ENCODE measurements at regions of chr3 and their contacts with region 1.

Region 1: DNA sequence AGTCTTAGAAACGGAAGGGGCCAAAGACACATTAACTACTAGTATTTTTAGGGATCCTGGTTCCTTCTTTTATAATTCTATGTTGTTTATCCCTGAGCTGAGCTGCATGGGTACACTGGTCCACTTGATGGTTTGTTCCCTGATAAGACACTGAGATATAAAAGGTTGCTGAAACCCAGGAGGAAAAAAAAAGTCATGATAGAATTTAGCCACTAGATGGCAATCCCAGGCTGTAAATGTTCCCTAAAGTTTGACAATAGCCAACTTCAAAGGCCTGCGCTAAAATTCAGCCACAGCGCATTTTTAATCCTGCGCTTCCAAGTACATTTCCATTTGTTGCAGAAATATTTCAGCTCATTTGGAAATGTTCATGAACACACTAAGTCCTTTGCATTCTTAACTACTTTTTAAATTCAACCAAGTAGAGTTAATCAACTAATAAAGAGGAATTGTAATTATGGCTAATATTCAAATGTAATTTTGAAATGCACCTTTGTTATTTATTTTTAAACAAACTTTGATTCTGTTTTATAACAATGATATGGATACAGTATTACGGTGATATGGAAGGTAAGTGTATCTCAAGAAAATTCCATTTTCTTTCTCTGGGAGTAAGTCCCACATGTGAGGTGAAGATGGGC is 249.3 kb upstream of the FEZF2 start:
- DNase-seq: peak in 1 of 9 donors; percentile 3
- ATAC-seq: no peak
- H3K4me3 ChIP-seq: no peak overlapping the region
- H3K4me3 Mint-ChIP-seq: no peak overlapping the region
- H3K27ac ChIP-seq: no peak overlapping the region
- H3K27ac Mint-ChIP-seq: no peak overlapping the region
- H3K4me1 ChIP-seq: no peaks in the 10 kb centered on the region
- H3K4me1 Mint-ChIP-seq: no peaks in the 10 kb centered on the region
- H3K27me3 ChIP-seq: no peaks in the 10 kb centered on the region
- H3K27me3 Mint-ChIP-seq: peaks cover 3 to 26% (median 11%) of the 10 kb centered on the region in 5 donors

Region 2: GRCh38 chr3:63232739-63233365 is 610.2 kb after region 1 on chr3:
- CTCF ChIA-PET with region 1: no interaction called
- POLR2A ChIA-PET with region 1: no interaction called
- intact Hi-C with region 1: loop called in 1 of 2 experiments (anchors 5 kb)
- DNase-seq: no peak
- ATAC-seq: no peak
- H3K4me3 ChIP-seq: no peak overlapping the region
- H3K4me3 Mint-ChIP-seq: no peak overlapping the region
- H3K27ac ChIP-seq: no peak overlapping the region
- H3K27ac Mint-ChIP-seq: no peak overlapping the region
- H3K4me1 ChIP-seq: no peaks in the 10 kb centered on the region
- H3K4me1 Mint-ChIP-seq: no peaks in the 10 kb centered on the region
- H3K27me3 ChIP-seq: no peaks in the 10 kb centered on the region
- H3K27me3 Mint-ChIP-seq: no peaks in the 10 kb centered on the region

Region 3: GRCh38 chr3:64484289-64484992 is 1861.8 kb after region 1 on chr3:
- CTCF ChIA-PET with region 1: no interaction called
- POLR2A ChIA-PET with region 1: no interaction called
- intact Hi-C with region 1: loop called in 1 of 2 experiments (anchors 5 kb)
- DNase-seq: peak; percentile 18 to 64 (median 46)
- ATAC-seq: peak; percentile 82
- H3K4me3 ChIP-seq: no peak overlapping the region
- H3K4me3 Mint-ChIP-seq: no peak overlapping the region
- H3K27ac ChIP-seq: no peak overlapping the region
- H3K27ac Mint-ChIP-seq: peak overlapping the region in 1 of 9 donors; percentile 37
- H3K4me1 ChIP-seq: no peaks in the 10 kb centered on the region
- H3K4me1 Mint-ChIP-seq: peaks cover 0 to 10% (median 0%) of the 10 kb centered on the region in 7 donors
- H3K27me3 ChIP-seq: no peaks in the 10 kb centered on the region
- H3K27me3 Mint-ChIP-seq: peaks cover 15 to 22% (median 19%) of the 10 kb centered on the region in 5 donors

Measured in naive thymus-derived CD4-positive, alpha-beta T cell (primary cell).